Activated CD4-positive, alpha-beta memory T cell treated with anti-CD3 and anti-CD28 coated beads for 36 hours (primary cell): ENCODE measurements at regions of chr15 and their contacts with region 1.

Region 1: DNA sequence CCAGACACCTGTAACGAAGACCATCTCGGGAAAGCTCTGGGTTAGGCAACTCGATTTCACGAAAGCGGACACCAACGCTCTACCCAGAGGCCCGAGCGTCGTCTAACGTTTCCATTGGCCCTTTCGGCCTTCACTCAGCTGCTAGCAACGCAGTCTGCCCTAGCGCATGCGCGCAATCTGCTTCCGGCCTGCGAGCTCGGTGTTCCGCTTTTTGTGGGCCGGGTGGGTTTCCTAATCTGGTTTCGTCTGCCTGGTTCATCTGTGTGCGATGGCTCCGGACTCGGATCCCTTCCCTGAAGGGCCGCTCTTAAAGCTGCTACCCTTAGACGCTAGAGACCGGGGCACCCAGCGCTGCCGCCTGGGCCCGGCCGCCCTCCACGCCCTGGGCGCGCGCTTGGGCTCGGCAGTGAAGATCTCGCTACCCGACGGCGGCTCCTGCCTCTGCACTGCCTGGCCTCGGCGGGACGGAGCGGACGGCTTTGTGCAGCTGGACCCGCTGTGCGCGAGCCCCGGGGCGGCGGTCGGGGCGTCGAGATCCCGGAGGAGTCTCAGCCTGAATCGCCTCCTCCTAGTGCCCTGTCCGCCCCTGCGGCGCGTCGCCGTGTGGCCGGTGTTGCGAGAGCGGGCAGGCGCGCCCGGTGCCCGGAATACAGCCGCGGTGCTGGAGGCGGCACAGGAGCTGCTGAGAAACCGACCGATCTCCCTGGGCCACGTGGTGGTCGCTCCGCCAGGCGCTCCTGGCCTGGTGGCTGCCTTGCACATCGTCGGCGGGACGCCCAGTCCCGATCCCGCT is 24.0 kb upstream of the GATM start:
- DNase-seq: peak; percentile 98
- H3K4me3 Mint-ChIP-seq: peak overlapping the region; percentile 98
- H3K27ac Mint-ChIP-seq: peak overlapping the region; percentile 90
- H3K4me1 Mint-ChIP-seq: peaks cover 31% of the 10 kb centered on the region
- H3K27me3 Mint-ChIP-seq: no peaks in the 10 kb centered on the region

Region 2: GRCh38 chr15:43824302-43825246 is 1577.8 kb before region 1 on chr15 and contains the start of gene MFAP1:
- CTCF ChIA-PET with region 1: no interaction called
- POLR2A ChIA-PET with region 1: no interaction called
- intact Hi-C with region 1: loop called (anchors 10 kb)
- DNase-seq: peak; percentile 96
- H3K4me3 Mint-ChIP-seq: peak within 1 kb of the TSS; percentile 99
- H3K27ac Mint-ChIP-seq: peak within 1 kb of the TSS; percentile 97
- H3K4me1 Mint-ChIP-seq: peaks cover 56% of the 10 kb centered on the region
- H3K27me3 Mint-ChIP-seq: no peaks in the 10 kb centered on the region
- total RNA-seq, gene MFAP1: 37.2 to 38.0 TPM

Region 3: GRCh38 chr15:45166834-45167630 is 235.3 kb before region 1 on chr15:
- CTCF ChIA-PET with region 1: interaction called, 60 read pairs
- POLR2A ChIA-PET with region 1: interaction called, 9 read pairs
- intact Hi-C with region 1: loop called (anchors 1 kb)
- DNase-seq: peak; percentile 92
- H3K4me3 Mint-ChIP-seq: peak overlapping the region; percentile 62
- H3K27ac Mint-ChIP-seq: peak overlapping the region; percentile 77
- H3K4me1 Mint-ChIP-seq: peaks cover 13% of the 10 kb centered on the region
- H3K27me3 Mint-ChIP-seq: no peaks in the 10 kb centered on the region

Region 4: DNA sequence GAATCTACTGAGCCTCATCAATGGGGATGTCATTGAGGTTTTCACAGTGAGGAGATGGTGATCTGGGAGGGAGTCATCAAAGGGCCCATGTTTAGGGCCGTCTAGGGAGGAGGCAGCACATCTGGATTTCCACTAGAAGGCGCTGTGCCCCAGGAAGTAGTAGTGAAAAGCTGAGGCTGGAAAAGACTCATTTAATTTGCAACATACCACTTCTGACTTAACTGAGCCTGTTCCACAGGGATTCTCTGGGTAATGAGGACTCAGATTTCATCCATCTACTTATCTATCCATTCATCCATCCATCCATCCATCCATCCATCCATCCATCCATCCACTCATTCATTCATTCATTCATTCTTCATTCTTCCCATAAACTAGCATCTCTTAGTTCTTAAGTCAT is 197.2 kb before region 1 on chr15:
- CTCF ChIA-PET with region 1: interaction called, 71 read pairs
- POLR2A ChIA-PET with region 1: interaction called, 18 read pairs
- intact Hi-C with region 1: loop called (anchors 1 kb)
- DNase-seq: peak; percentile 81
- H3K4me3 Mint-ChIP-seq: no peak overlapping the region
- H3K27ac Mint-ChIP-seq: no peak overlapping the region
- H3K4me1 Mint-ChIP-seq: peaks cover 4% of the 10 kb centered on the region
- H3K27me3 Mint-ChIP-seq: peaks cover 7% of the 10 kb centered on the region

Region 5: DNA sequence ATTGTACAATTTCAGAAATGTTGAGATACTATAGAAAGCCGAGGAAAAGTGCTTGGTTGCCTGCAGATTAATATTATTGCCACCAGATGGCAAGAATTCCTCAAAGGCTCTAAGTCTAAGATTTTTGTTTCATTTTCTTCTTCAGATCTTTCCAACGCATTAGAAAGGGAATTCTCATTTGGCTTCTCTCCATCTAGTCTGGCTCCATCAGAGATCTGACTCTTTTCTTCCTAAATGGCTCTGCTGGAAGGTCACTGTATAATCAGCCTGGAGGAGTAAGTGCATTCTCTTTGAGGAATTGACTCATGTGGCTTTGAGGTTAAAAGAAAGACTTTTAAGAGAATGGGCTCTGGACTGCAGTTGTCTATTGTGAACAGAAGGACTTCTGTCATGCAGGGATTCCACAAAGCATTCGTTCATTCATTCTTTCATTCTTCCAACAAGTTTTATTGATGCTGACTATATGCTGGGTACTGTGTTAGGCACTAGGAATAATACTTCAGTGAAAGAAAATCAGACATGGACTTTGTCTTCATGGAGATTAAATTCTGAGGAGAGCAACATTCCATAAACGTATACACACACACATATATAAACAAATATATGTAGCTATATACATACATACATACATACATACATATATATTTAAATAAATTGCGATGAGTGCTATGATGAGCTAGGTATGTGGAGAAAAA is 95.0 kb before region 1 on chr15:
- CTCF ChIA-PET with region 1: interaction called, 9 read pairs
- POLR2A ChIA-PET with region 1: no interaction called
- intact Hi-C with region 1: loop called (anchors 1 kb)
- DNase-seq: no peak
- H3K4me3 Mint-ChIP-seq: no peak overlapping the region
- H3K27ac Mint-ChIP-seq: no peak overlapping the region
- H3K4me1 Mint-ChIP-seq: peaks cover 4% of the 10 kb centered on the region
- H3K27me3 Mint-ChIP-seq: peaks cover 16% of the 10 kb centered on the region

Region 6: DNA sequence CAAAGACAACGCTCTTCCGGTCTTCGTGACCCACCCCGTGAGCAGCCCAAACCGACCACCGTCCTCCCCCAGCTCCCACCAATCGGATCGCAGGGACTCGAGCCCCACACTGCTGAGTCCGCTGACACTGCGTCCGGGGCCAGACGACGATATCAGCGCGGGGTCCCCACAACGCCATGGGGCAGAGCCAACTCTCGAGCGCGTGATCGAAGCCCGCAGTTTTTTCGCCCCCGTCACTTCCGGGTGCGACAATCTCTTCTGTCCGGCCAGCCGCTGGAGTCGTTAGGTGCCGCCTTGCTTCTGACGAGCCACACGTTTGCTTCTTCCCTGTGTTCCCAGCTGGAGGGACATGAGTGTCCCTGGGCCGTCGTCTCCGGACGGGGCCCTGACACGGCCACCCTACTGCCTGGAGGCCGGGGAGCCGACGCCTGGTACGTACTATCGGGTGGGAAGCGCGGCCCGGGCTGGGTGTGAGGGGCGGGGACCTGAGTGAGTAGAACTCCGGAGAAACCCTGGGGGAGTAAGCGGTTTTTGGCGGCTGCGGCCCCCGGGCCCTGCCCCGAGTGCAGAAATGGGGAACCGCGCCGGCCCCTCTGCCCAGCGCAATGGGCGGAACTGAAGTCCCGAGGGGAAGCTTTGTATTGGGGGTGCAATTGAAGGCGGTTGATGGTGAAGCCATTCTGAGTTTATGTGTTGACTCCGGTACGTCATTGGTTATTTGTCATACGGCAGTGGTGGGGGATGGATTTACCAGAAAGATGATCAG is 184.9 kb after region 1 on chr15 and contains the start of gene BLOC1S6:
- CTCF ChIA-PET with region 1: interaction called, 6 read pairs
- POLR2A ChIA-PET with region 1: interaction called, 16 read pairs
- intact Hi-C with region 1: loop called (anchors 1 kb)
- DNase-seq: peak; percentile 92
- H3K4me3 Mint-ChIP-seq: peak within 1 kb of the TSS; percentile 99
- H3K27ac Mint-ChIP-seq: peak within 1 kb of the TSS; percentile 100
- H3K4me1 Mint-ChIP-seq: peaks cover 38% of the 10 kb centered on the region
- H3K27me3 Mint-ChIP-seq: no peaks in the 10 kb centered on the region
- total RNA-seq, gene BLOC1S6: 48.5 to 49.4 TPM

Region 7: DNA sequence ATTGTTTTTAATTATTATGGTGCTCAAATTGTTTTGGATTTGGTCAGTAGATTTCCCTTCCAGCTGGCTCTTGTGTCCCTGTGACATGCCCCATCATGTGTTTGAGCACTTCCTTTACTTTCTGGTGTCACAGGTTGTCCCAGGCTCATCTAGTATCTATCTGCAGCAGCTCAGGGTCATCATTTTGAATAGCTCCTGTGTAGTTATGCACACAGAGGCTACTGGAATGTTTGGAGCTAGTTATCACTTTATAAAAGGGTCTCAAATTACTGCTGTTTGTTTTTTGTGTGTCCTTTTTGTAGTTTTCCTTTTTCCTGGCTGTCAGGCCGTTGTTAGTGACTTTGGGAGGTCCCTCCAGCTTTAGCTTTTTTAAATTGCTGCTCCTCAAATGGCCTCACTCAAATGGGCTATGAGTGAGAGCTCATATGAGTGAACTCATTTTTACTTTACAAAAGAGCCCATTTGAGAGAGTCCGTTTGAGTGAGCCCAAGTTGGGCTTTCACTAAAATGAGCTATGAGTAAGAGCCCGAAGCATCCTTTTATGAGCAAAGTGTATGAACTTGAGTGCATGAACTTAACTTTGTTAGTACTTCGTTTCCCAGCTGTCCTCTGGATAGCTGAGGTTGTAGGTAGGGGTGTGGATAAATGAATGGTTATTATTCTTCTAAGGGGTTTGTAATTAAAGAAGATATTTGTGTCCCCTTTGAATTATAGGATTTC is 276.3 kb after region 1 on chr15:
- CTCF ChIA-PET with region 1: no interaction called
- POLR2A ChIA-PET with region 1: no interaction called
- intact Hi-C with region 1: no loop called
- DNase-seq: no peak
- H3K4me3 Mint-ChIP-seq: no peak overlapping the region
- H3K27ac Mint-ChIP-seq: no peak overlapping the region
- H3K4me1 Mint-ChIP-seq: no peaks in the 10 kb centered on the region
- H3K27me3 Mint-ChIP-seq: no peaks in the 10 kb centered on the region